Psoas muscle (tissue), 8 donors: ENCODE measurements at regions of chr17 and their contacts with region 1.

Region 1: GRCh38 chr17:3668279-3669085 is at the starts of genes EMC6 and TAX1BP3:
- DNase-seq: peak; percentile 99 to 100
- ATAC-seq: peak; percentile 87 to 91 (median 90)
- H3K4me3 ChIP-seq: peak within 1 kb of the TSS; percentile 97
- H3K27ac ChIP-seq: peak within 1 kb of the TSS; percentile 96
- H3K4me1 ChIP-seq: peaks cover 35% of the 10 kb centered on the region
- H3K27me3 ChIP-seq: no peaks in the 10 kb centered on the region
- CTCF ChIP-seq: no peak
- total RNA-seq, gene EMC6: 91.6 to 135 (median 97.0) TPM
- total RNA-seq, gene TAX1BP3: 20.4 to 23.9 (median 22.8) TPM

Region 2: GRCh38 chr17:3639981-3640596 is 28.4 kb before region 1 on chr17:
- intact Hi-C with region 1: loop called in 1 of 2 experiments (anchors 1 kb)
- DNase-seq: peak in 1 of 2 donors; percentile 56
- ATAC-seq: peak in 3 of 4 donors; percentile 21 to 56 (median 32)
- H3K4me3 ChIP-seq: no peak overlapping the region
- H3K27ac ChIP-seq: peak overlapping the region; percentile 83
- H3K4me1 ChIP-seq: peaks cover 23% of the 10 kb centered on the region
- H3K27me3 ChIP-seq: no peaks in the 10 kb centered on the region
- CTCF ChIP-seq: no peak

Region 3: DNA sequence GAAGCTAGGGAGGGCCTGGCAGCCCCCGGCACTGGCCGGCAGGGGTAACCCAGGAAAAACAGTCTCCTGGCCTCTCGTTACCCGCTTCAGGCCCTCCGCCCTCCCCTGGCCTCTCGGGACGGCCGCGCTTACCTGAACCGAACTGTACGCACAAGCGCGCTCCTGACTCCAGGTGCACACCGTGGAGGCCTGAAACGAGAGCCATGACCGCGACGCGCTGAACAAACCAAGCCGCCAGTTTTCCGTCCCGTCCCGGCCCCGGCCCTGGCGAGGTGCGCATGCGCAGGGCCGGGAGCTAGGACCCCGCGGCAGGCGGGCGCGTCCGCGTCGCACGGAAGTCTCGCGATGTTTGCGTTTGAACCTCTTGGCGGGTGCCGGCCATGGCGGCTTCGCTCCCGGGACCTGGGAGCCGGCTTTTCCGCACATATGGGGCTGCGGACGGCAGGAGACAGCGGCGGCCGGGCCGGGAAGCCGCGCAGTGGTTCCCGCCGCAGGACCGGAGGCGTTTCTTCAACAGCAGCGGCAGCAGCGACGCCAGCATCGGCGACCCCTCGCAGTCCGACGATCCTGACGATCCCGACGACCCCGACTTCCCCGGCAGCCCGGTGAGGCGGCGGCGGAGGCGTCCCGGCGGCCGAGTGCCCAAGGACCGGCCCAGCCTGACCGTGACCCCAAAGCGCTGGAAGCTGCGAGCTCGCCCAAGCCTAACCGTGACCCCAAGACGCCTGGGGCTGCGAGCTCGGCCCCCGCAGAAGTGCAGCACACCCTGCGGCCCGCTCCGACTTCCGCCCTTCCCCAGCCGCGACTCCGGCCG is 55.3 kb after region 1 on chr17 and contains the start of gene HASPIN:
- intact Hi-C with region 1: no loop called
- DNase-seq: peak; percentile 90 to 96
- ATAC-seq: peak; percentile 90 to 97 (median 92)
- H3K4me3 ChIP-seq: peak within 1 kb of the TSS; percentile 72
- H3K27ac ChIP-seq: peak within 1 kb of the TSS; percentile 91
- H3K4me1 ChIP-seq: peaks cover 25% of the 10 kb centered on the region
- H3K27me3 ChIP-seq: no peaks in the 10 kb centered on the region
- CTCF ChIP-seq: peak; percentile 26
- total RNA-seq, gene HASPIN: 0.69 to 2.1 (median 0.92) TPM